IMR-90 (cell line): ENCODE measurements at regions of chr10 and their contacts with region 1.

Region 1: GRCh38 chr10:91969297-91969696 is 45.7 kb downstream of the BTAF1 start:
- DNase-seq: no peak
- ATAC-seq: no peak
- H3K4me3 ChIP-seq: no peak overlapping the region
- H3K27ac ChIP-seq: no peak overlapping the region
- H3K4me1 ChIP-seq: peaks cover under 1% of the 10 kb centered on the region; the same call in 1 of the 2 replicates
- H3K27me3 ChIP-seq: no peaks in the 10 kb centered on the region
- CTCF ChIP-seq: no peak
- POLR2A ChIP-seq: no peak
- RAD21 ChIP-seq: no peak

Region 2: GRCh38 chr10:91864099-91864498 is 105.2 kb before region 1 on chr10:
- CTCF ChIA-PET with region 1: no interaction called
- POLR2A ChIA-PET with region 1: no interaction called
- dilution Hi-C with region 1: no loop called
- in situ Hi-C with region 1: no loop called
- intact Hi-C with region 1: loop called (anchors 10 kb)
- DNase-seq: no peak
- ATAC-seq: no peak; the same call in 1 of the 2 replicates
- H3K4me3 ChIP-seq: no peak overlapping the region
- H3K27ac ChIP-seq: no peak overlapping the region
- H3K4me1 ChIP-seq: peaks cover 4% of the 10 kb centered on the region
- H3K27me3 ChIP-seq: no peaks in the 10 kb centered on the region
- CTCF ChIP-seq: no peak
- POLR2A ChIP-seq: no peak
- RAD21 ChIP-seq: no peak

Region 3: GRCh38 chr10:91908337-91909116 is 60.8 kb before region 1 on chr10:
- CTCF ChIA-PET with region 1: no interaction called
- POLR2A ChIA-PET with region 1: no interaction called
- dilution Hi-C with region 1: no loop called
- in situ Hi-C with region 1: no loop called
- intact Hi-C with region 1: no loop called
- DNase-seq: peak; percentile 67
- ATAC-seq: peak; percentile 91
- H3K4me3 ChIP-seq: peak overlapping the region; percentile 72
- H3K27ac ChIP-seq: peak overlapping the region; percentile 24; the same call in 1 of the 2 replicates
- H3K4me1 ChIP-seq: no peaks in the 10 kb centered on the region
- H3K27me3 ChIP-seq: no peaks in the 10 kb centered on the region
- CTCF ChIP-seq: peak; percentile 38
- POLR2A ChIP-seq: no peak
- RAD21 ChIP-seq: no peak; the same call in 1 of the 2 replicates

Region 4: GRCh38 chr10:92240289-92241157 is 271.2 kb after region 1 on chr10:
- CTCF ChIA-PET with region 1: no interaction called
- POLR2A ChIA-PET with region 1: no interaction called
- dilution Hi-C with region 1: no loop called
- in situ Hi-C with region 1: no loop called
- intact Hi-C with region 1: no loop called
- DNase-seq: peak; percentile 70
- ATAC-seq: peak; percentile 66
- H3K4me3 ChIP-seq: peak overlapping the region; percentile 78
- H3K27ac ChIP-seq: peak overlapping the region; percentile 31
- H3K4me1 ChIP-seq: peaks cover 2% of the 10 kb centered on the region; the same call in 1 of the 2 replicates
- H3K27me3 ChIP-seq: no peaks in the 10 kb centered on the region
- CTCF ChIP-seq: no peak
- POLR2A ChIP-seq: no peak
- RAD21 ChIP-seq: no peak

Region 5: DNA sequence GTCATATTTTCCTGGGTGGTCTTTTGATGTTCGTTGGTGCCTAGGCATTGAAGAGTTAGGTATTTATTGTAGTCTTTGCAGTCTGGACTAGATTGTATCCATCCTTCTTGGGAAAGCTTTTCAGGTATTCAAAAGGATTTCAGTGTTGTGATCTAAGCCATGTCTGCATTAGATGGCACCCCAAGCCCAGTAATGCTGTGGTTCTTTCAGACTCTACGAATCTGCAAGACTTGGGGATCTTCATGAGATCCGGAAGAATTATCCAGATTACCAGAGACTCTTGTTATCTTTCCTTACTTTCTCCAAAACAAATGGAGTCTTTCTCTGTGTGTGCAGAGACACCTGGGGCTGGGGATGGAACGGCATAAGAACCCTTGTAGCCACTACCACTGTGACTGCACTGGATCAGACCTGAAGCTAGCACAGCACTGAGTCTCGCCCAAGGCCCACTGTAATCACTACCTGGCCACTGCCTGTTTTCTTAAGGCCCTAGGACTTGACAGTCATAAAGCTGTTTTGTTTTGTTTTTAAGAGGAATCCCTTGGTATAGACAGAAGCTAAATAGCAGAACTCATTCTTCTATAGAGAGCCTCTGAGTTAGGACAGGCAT is 397.2 kb after region 1 on chr10:
- CTCF ChIA-PET with region 1: no interaction called
- POLR2A ChIA-PET with region 1: no interaction called
- dilution Hi-C with region 1: no loop called
- in situ Hi-C with region 1: no loop called
- intact Hi-C with region 1: no loop called
- DNase-seq: no peak
- ATAC-seq: no peak
- H3K4me3 ChIP-seq: no peak overlapping the region
- H3K27ac ChIP-seq: no peak overlapping the region
- H3K4me1 ChIP-seq: no peaks in the 10 kb centered on the region
- H3K27me3 ChIP-seq: no peaks in the 10 kb centered on the region; the same call in 1 of the 2 replicates
- CTCF ChIP-seq: no peak
- POLR2A ChIP-seq: no peak
- RAD21 ChIP-seq: no peak

Region 6: DNA sequence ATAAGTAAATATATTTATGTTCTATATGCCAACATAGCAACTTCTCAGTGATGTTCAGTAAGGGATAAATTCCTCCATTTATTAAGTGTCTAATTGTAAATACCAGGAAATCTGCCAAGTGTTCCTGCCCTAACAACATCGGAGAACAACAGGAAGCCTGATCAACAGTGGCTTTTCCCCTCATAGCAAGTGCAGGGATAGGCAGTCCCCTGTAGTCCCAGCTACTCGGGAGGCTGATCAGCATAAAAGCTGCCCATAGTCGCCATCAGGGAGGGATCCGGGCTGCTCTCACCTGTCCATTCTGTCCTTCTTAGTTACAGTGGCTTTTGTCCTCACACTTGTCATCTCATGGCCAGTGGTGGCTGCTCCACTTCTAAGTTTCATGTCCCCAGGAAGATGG is 463.3 kb after region 1 on chr10:
- CTCF ChIA-PET with region 1: no interaction called
- POLR2A ChIA-PET with region 1: no interaction called
- dilution Hi-C with region 1: no loop called
- in situ Hi-C with region 1: no loop called
- intact Hi-C with region 1: loop called (anchors 10 kb)
- DNase-seq: no peak
- ATAC-seq: no peak
- H3K4me3 ChIP-seq: no peak overlapping the region
- H3K27ac ChIP-seq: no peak overlapping the region
- H3K4me1 ChIP-seq: no peaks in the 10 kb centered on the region
- H3K27me3 ChIP-seq: no peaks in the 10 kb centered on the region
- CTCF ChIP-seq: no peak
- POLR2A ChIP-seq: no peak
- RAD21 ChIP-seq: no peak